ENCODE measurements at regions of chr17 and their contacts with region 1.

Region 1: GRCh38 chr17:39199820-39200069 is 338 bp upstream of the RPL19 start:
- DNase-seq: peak; percentile 65
- ATAC-seq: peak; percentile 65
- H3K4me3 Mint-ChIP-seq: peak overlapping the region; percentile 99
- H3K27ac Mint-ChIP-seq: peak overlapping the region; percentile 100
- H3K4me1 Mint-ChIP-seq: peaks cover 69% of the 10 kb centered on the region
- H3K27me3 Mint-ChIP-seq: no peaks in the 10 kb centered on the region
- CTCF ChIP-seq: no peak

Region 2: GRCh38 chr17:38794221-38794620 is 405.5 kb before region 1 on chr17:
- CTCF ChIA-PET with region 1: no interaction called
- POLR2A ChIA-PET with region 1: interaction called, 13 read pairs
- intact Hi-C with region 1: no loop called
- DNase-seq: no peak
- ATAC-seq: no peak
- H3K4me3 Mint-ChIP-seq: no peak overlapping the region
- H3K27ac Mint-ChIP-seq: no peak overlapping the region
- H3K4me1 Mint-ChIP-seq: peaks cover 37% of the 10 kb centered on the region
- H3K27me3 Mint-ChIP-seq: no peaks in the 10 kb centered on the region
- CTCF ChIP-seq: no peak

Region 3: GRCh38 chr17:38906460-38907228 is 293.1 kb before region 1 on chr17:
- CTCF ChIA-PET with region 1: no interaction called
- POLR2A ChIA-PET with region 1: interaction called, 10 read pairs
- intact Hi-C with region 1: no loop called
- DNase-seq: no peak
- ATAC-seq: no peak
- H3K4me3 Mint-ChIP-seq: no peak overlapping the region
- H3K27ac Mint-ChIP-seq: peak overlapping the region; percentile 74
- H3K4me1 Mint-ChIP-seq: peaks cover 42% of the 10 kb centered on the region
- H3K27me3 Mint-ChIP-seq: no peaks in the 10 kb centered on the region
- CTCF ChIP-seq: no peak

Region 4: GRCh38 chr17:39022924-39023323 is 176.8 kb before region 1 on chr17:
- CTCF ChIA-PET with region 1: no interaction called
- POLR2A ChIA-PET with region 1: no interaction called
- intact Hi-C with region 1: no loop called
- DNase-seq: no peak
- ATAC-seq: no peak
- H3K4me3 Mint-ChIP-seq: no peak overlapping the region
- H3K27ac Mint-ChIP-seq: no peak overlapping the region
- H3K4me1 Mint-ChIP-seq: peaks cover 16% of the 10 kb centered on the region
- H3K27me3 Mint-ChIP-seq: peaks cover 19% of the 10 kb centered on the region
- CTCF ChIP-seq: no peak

Region 5: DNA sequence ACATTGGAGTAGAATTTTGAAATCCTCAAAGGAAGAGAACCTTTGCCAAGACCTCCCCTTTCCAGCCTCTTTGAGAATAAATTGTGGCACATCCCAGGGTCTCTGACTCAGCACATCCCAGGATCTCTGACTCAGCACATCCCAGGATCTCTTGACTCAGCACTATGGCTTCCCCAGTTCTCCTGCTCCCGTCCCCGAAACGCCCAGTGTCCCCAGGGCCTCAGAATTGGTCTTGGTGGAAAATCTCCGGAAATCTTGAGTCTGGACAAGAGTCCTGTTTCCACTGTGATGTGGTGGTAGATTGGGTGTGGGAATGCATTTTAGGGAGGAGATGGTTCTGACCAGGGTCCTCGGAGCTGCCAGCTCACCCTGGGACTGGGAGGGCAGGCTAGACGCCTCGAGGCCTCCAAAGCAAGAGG is 67.5 kb before region 1 on chr17:
- CTCF ChIA-PET with region 1: no interaction called
- POLR2A ChIA-PET with region 1: no interaction called
- intact Hi-C with region 1: no loop called
- DNase-seq: no peak
- ATAC-seq: no peak
- H3K4me3 Mint-ChIP-seq: no peak overlapping the region
- H3K27ac Mint-ChIP-seq: no peak overlapping the region
- H3K4me1 Mint-ChIP-seq: no peaks in the 10 kb centered on the region
- H3K27me3 Mint-ChIP-seq: peaks cover 6% of the 10 kb centered on the region
- CTCF ChIP-seq: no peak

Region 6: DNA sequence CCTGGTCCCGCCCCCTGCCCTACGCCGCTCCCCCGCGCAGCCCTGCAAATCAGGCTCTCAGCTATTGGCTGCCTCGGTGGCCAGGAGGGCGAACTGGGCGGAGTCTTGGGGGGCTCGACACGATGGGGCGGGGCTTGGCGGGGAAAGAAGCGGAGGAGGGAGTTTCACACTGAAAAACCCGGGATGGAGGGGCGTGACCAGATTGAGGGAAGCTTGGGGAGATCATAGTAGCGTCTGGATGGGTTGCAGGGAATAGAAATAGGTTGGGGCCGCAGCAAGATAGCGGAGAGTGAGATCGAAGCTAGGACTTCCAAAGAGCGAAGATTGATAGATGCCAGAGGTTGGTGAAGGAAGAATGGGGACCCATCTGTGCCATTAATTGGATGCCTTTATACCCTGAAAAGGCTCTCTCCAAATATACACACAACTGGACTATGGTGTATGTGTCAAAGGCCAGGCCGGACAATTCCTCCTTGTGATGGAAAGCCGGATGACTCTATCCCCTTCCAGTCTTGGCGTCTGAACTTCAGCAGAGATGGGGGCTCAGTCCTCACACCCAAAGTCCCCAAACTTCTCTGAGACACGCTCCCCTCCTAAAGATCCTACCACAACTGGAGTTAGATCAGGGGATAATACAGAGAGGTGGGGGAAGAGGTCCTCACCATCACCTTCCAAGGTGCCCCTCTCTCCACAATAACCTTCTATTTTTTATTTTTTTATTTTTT is 26.4 kb after region 1 on chr17:
- CTCF ChIA-PET with region 1: interaction called, 151 read pairs
- POLR2A ChIA-PET with region 1: interaction called, 19 read pairs
- intact Hi-C with region 1: no loop called
- DNase-seq: no peak
- ATAC-seq: peak; percentile 63
- H3K4me3 Mint-ChIP-seq: peak overlapping the region; percentile 78
- H3K27ac Mint-ChIP-seq: peak overlapping the region; percentile 7
- H3K4me1 Mint-ChIP-seq: peaks cover 12% of the 10 kb centered on the region
- H3K27me3 Mint-ChIP-seq: peaks cover 39% of the 10 kb centered on the region
- CTCF ChIP-seq: no peak

Region 7: DNA sequence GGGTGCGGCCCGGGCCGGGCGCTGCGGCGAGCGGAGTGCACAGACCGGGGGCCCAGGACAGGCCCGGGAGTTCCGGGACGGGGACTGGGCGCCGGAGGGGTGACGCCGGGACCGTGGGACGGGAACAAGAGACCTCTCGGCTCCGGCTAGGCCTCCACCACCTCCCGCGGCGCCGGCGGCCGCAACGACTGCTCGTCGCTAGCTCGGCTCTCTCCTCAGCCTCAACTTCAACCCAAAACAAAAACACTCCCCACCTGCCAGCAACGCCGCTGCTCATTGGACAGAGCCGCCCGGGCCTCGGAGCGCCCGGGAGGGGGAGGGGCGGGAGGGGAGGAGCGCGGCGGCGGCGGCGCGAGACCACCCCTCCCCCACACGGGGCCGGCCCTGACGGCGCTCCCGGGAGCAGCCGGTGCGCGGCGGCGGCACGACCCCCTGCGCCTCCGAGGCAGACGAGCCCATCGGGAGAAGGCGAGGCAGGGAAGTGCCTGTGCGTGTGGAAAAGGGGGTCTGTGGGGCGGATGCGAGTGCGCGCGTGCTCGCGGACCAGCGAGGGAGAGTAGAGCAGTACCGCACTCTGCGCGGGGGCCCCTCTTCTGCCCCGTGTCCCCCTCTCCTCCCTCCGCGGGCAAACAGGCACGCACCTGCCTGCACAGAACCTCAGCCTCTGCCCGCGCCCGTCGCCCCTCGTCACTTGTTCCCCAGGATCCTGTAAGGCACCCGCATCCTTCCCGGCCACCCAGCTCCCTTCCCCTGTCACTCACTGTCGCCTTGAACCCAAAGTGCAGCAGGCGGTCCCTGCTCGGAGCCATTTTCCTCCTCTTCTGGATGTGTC is 201.9 kb after region 1 on chr17 and contains the start of gene FBXL20:
- CTCF ChIA-PET with region 1: no interaction called
- POLR2A ChIA-PET with region 1: interaction called, 4 read pairs
- intact Hi-C with region 1: loop called (anchors 2 kb)
- DNase-seq: peak; percentile 85
- ATAC-seq: peak; percentile 76
- H3K4me3 Mint-ChIP-seq: peak within 1 kb of the TSS; percentile 98
- H3K27ac Mint-ChIP-seq: peak within 1 kb of the TSS; percentile 96
- H3K4me1 Mint-ChIP-seq: peaks cover 20% of the 10 kb centered on the region
- H3K27me3 Mint-ChIP-seq: no peaks in the 10 kb centered on the region
- CTCF ChIP-seq: no peak
- total RNA-seq, gene FBXL20: 14.1 and 14.4 TPM in 2 replicates

Region 8: GRCh38 chr17:40323391-40324381 is 1123.9 kb after region 1 on chr17:
- CTCF ChIA-PET with region 1: no interaction called
- POLR2A ChIA-PET with region 1: interaction called, 13 read pairs
- intact Hi-C with region 1: no loop called
- DNase-seq: peak; percentile 72
- ATAC-seq: peak; percentile 40
- H3K4me3 Mint-ChIP-seq: peak overlapping the region; percentile 93
- H3K27ac Mint-ChIP-seq: peak overlapping the region; percentile 98
- H3K4me1 Mint-ChIP-seq: peaks cover 98% of the 10 kb centered on the region
- H3K27me3 Mint-ChIP-seq: no peaks in the 10 kb centered on the region
- CTCF ChIP-seq: no peak